HepG2 (cell line): ENCODE measurements at regions of chr1 and their contacts with region 1.

Region 1: DNA sequence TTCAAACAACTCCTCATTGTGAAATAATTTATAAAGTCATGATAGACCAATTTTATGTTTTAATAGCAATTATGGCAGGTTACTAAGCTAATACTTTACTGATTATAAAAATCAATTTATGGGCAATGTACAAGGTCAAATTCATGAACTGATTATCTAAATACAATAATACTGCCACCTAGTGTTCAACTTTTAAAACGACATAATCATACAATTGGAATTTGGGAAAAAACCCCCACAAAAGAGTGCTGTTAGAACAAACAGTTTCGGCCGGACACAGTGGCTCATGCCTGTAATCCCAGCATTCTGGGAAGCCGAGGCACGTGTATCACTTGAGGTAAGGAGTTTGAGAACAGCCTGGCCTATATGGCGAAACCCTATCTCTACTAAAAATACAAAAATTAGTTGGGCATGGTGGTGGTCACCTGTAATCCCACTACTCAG is 14.0 kb downstream of the GTF2B start:
- DNase-seq: peak; percentile 24
- ATAC-seq: peak; percentile 57; the same call in 2 of the 3 replicates
- H3K4me3 ChIP-seq: no peak overlapping the region
- H3K27ac ChIP-seq: no peak overlapping the region
- H3K4me1 ChIP-seq: peaks cover 4% of the 10 kb centered on the region; the same call in 1 of the 2 replicates
- H3K27me3 ChIP-seq: no peaks in the 10 kb centered on the region
- CTCF ChIP-seq: peak; percentile 58
- EP300 ChIP-seq: no peak
- POLR2A ChIP-seq: no peak
- RAD21 ChIP-seq: no peak

Region 2: GRCh38 chr1:88640060-88640459 is 237.3 kb before region 1 on chr1:
- CTCF ChIA-PET with region 1: no interaction called
- POLR2A ChIA-PET with region 1: no interaction called
- in situ Hi-C with region 1: no loop called
- intact Hi-C with region 1: no loop called
- DNase-seq: no peak
- ATAC-seq: no peak
- H3K4me3 ChIP-seq: no peak overlapping the region
- H3K27ac ChIP-seq: no peak overlapping the region
- H3K4me1 ChIP-seq: no peaks in the 10 kb centered on the region
- H3K27me3 ChIP-seq: no peaks in the 10 kb centered on the region
- CTCF ChIP-seq: no peak
- EP300 ChIP-seq: no peak
- POLR2A ChIP-seq: no peak
- RAD21 ChIP-seq: no peak

Region 3: DNA sequence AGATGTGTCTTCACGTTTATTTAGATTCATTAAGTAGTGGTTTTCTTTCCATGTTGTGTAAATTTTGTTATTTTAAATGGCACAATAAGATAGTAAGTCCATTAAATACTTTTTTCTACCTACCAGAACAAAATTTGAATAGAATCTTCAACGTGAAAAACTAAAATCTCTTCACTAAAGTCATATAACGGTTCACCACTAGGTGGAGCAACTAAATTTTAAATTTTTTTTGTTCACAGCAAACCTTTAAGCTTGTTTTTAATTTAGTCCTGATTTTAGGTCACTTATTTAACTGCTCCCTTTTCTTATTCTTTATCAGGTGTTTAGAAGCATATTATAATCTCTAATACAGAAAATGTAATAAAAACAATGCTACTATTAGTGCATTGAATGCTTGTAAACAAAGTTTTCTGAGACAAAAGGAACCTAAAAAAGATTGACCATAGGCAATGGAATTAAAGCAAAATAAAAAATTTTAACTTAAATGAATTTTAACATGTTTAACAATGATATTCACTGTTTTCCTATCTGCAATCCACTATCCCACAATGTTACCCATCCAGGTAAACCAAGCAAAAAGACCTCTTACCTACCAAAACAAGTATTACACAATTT is 221.6 kb before region 1 on chr1:
- CTCF ChIA-PET with region 1: no interaction called
- POLR2A ChIA-PET with region 1: no interaction called
- in situ Hi-C with region 1: loop called (anchors 10 kb)
- intact Hi-C with region 1: loop called (anchors 5 kb)
- DNase-seq: peak; percentile 10
- ATAC-seq: no peak
- H3K4me3 ChIP-seq: no peak overlapping the region
- H3K27ac ChIP-seq: no peak overlapping the region
- H3K4me1 ChIP-seq: peaks cover 13% of the 10 kb centered on the region
- H3K27me3 ChIP-seq: no peaks in the 10 kb centered on the region
- CTCF ChIP-seq: no peak; the same call in 1 of the 2 replicates
- EP300 ChIP-seq: no peak
- POLR2A ChIP-seq: no peak
- RAD21 ChIP-seq: no peak

Region 4: GRCh38 chr1:88736639-88737248 is 140.7 kb before region 1 on chr1:
- CTCF ChIA-PET with region 1: no interaction called
- POLR2A ChIA-PET with region 1: no interaction called
- in situ Hi-C with region 1: no loop called
- intact Hi-C with region 1: loop called (anchors 1 kb)
- DNase-seq: peak; percentile 38
- ATAC-seq: peak; percentile 94
- H3K4me3 ChIP-seq: no peak overlapping the region
- H3K27ac ChIP-seq: no peak overlapping the region
- H3K4me1 ChIP-seq: peaks cover 18% of the 10 kb centered on the region
- H3K27me3 ChIP-seq: no peaks in the 10 kb centered on the region
- CTCF ChIP-seq: peak; percentile 75
- EP300 ChIP-seq: no peak
- POLR2A ChIP-seq: no peak
- RAD21 ChIP-seq: peak; percentile 42; the same call in 1 of the 2 replicates

Region 5: GRCh38 chr1:88800382-88801051 is 76.9 kb before region 1 on chr1:
- CTCF ChIA-PET with region 1: no interaction called
- POLR2A ChIA-PET with region 1: no interaction called
- in situ Hi-C with region 1: no loop called
- intact Hi-C with region 1: loop called (anchors 1 kb)
- DNase-seq: peak; percentile 33
- ATAC-seq: peak; percentile 75
- H3K4me3 ChIP-seq: no peak overlapping the region
- H3K27ac ChIP-seq: no peak overlapping the region
- H3K4me1 ChIP-seq: no peaks in the 10 kb centered on the region
- H3K27me3 ChIP-seq: no peaks in the 10 kb centered on the region
- CTCF ChIP-seq: peak; percentile 68
- EP300 ChIP-seq: no peak
- POLR2A ChIP-seq: no peak
- RAD21 ChIP-seq: no peak